PC-9 (cell line): ENCODE measurements at regions of chr12 and their contacts with region 1.

Region 1: DNA sequence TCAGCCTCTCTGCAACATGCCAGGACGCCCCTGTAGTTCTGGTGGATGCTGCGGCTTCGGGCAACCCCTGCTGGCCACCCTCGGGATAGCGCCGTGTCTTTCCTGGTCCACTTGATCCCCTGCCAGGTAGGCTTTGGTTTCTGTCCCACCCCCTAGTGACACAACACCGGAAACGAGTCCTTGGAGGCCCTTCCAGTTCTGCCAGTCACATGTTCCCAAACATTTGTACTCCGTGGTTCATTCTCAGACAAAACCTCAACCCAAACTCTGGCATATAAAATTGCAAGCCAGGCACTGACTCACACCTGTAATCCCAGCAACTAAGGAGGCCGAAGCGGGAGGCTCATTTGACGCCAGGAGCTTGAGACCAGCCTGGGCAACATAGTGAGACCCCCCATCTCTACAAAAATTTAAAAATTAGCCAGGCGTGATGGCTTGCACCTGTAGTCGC is 37.1 kb downstream of the RASAL1 start:
- DNase-seq: peak; percentile 90 to 93
- H3K4me3 ChIP-seq: no peak overlapping the region
- H3K27ac ChIP-seq: peak overlapping the region; percentile 24; the same call in 1 of the 2 replicates
- H3K4me1 ChIP-seq: 0 out of 2 replicates have a peak, but pooled peaks cover 4% of the 10 kb centered on the region
- H3K27me3 ChIP-seq: no peaks in the 10 kb centered on the region
- CTCF ChIP-seq: peak; percentile 93

Region 2: DNA sequence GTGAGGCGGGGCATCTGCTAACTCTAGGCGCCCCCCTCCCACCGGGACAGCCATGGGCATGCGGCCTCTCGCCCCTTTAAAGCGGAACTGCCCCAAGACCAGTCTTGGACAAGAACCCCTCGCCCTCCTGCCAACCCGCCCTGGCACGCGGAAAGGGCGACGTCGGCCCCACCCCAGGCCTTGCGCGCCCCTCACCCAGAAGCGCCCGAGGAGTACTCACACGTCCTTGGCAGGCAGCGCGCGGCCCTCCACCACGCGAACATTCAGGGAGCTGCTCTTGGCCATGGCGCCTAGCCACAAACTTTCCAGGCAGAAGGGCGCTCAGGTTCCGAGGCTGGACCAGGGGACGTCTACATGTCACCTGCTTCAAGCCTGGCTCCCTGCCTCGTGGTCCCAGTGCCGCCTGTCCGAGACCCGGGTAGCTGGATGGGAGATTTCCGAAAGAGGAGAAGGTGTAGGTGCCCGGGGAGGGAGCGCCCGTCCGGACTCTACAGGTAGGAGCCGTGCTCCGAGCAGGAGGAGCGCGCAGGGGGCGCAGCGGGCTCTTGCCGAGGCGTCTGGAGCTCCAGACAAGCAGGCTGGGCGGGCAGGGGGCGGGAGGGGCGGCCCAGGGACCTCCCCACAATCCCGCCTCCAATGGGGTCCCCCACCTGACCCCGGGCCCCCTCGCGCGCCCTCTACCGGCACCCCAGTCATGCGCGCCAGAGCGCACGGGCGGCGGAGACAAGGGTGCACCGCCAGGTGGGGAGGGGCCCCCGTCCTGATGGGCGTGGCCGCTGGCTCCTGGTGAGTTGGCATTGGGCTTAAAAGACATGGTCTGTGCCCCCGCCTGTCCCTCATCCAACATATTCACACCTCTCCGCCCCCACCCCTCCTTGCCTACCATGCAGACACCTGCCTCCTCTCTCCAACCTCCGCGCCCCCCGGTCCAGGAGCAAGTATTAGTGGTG is 37.0 kb after region 1 on chr12 and contains the start of gene RASAL1:
- CTCF ChIA-PET with region 1: no interaction called
- POLR2A ChIA-PET with region 1: no interaction called
- intact Hi-C with region 1: loop called (anchors 5 kb)
- DNase-seq: peak; percentile 74 to 97
- H3K4me3 ChIP-seq: peak within 1 kb of the TSS; percentile 91
- H3K27ac ChIP-seq: peak within 1 kb of the TSS; percentile 93
- H3K4me1 ChIP-seq: peaks cover 38% of the 10 kb centered on the region
- H3K27me3 ChIP-seq: no peaks in the 10 kb centered on the region
- CTCF ChIP-seq: peak; percentile 73
- total RNA-seq, gene RASAL1: 14.9 and 23.6 TPM in 2 replicates

Region 3: DNA sequence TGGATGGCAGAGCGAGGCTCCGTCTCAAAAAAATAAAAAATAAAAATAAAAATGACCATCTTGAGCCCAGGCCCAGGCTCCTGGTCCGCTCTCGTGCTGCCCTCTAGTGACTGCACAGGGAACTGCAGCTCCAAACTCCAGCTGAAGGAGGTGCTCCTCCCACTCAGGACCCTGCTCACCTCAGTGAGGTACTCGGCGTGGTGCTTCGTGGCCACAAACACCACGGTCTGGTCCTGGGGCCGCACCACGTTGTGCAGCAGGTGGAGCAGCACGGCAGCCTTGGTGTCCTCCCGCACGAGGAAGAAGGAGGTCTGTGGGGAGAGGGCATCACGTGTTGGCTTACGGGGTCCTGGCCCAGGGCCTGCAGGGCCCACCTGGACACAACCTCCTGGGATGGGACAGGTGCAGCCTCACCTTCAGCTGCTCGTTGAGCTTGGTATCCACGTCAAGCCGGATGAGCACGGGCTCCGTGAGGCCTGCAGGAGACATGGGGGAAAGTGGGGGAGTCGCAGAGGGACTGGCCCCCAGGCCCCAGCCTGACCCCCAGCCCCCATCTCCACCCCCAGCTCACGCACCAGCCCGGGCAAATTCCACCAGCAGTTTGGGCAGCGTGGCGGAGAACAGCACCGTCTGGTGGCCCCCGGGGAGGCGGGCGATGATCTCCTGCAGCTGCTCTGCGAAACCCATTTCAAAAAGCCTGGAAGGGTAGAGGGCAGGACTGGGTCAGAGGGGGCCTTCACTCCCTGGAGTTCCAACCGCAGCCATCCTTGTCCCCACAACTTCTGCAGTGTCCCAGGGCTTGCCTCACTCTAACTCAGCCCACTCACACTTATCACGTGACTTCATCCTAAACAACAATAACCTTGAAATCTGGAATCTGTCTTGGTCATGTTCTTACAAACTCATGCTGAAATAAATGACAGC is 76.3 kb after region 1 on chr12:
- CTCF ChIA-PET with region 1: no interaction called
- POLR2A ChIA-PET with region 1: no interaction called
- intact Hi-C with region 1: loop called (anchors 2 kb)
- DNase-seq: peak; percentile 50 to 75
- H3K4me3 ChIP-seq: no peak overlapping the region
- H3K27ac ChIP-seq: no peak overlapping the region
- H3K4me1 ChIP-seq: no peaks in the 10 kb centered on the region
- H3K27me3 ChIP-seq: no peaks in the 10 kb centered on the region
- CTCF ChIP-seq: peak; percentile 99